ENCODE measurements at regions of chr6 and their contacts with region 1.

Region 1: GRCh38 chr6:37705239-37706051 is 7.8 kb upstream of the MDGA1 start:
- DNase-seq: peak; percentile 67 to 85
- H3K4me3 ChIP-seq: peak overlapping the region; percentile 6 to 64 (median 38)
- H3K27ac ChIP-seq: peak overlapping the region; percentile 63; the same call in 1 of the 2 replicates
- H3K4me1 ChIP-seq: peaks cover 3 to 10% (median 8%) of the 10 kb centered on the region in 4 experiments; a peak in 6 of 7 replicates
- H3K27me3 ChIP-seq: peaks cover 11 to 23% (median 20%) of the 10 kb centered on the region in 4 experiments
- CTCF ChIP-seq: peak in 2 of 3 experiments; percentile 55 to 65; a peak in 3 of 4 replicates
- EP300 ChIP-seq: no peak
- POLR2A ChIP-seq: peak in 1 of 2 experiments; percentile 54; a peak in 2 of 3 replicates
- RAD21 ChIP-seq: peak; percentile 51

Region 2: GRCh38 chr6:37648465-37649330 is 56.7 kb before region 1 on chr6:
- CTCF ChIA-PET with region 1: interaction called, 11 read pairs
- POLR2A ChIA-PET with region 1: no interaction called
- DNase-seq: peak; percentile 77 to 100
- H3K4me3 ChIP-seq: peak overlapping the region; percentile 9 to 54 (median 38)
- H3K27ac ChIP-seq: no peak overlapping the region
- H3K4me1 ChIP-seq: peaks cover 0 to 10% (median 6%) of the 10 kb centered on the region in 4 experiments; a peak in 4 of 7 replicates
- H3K27me3 ChIP-seq: peaks cover 3 to 27% (median 19%) of the 10 kb centered on the region in 4 experiments
- CTCF ChIP-seq: peak in 1 of 3 experiments; percentile 6; a peak in 1 of 4 replicates
- EP300 ChIP-seq: peak in 1 of 2 experiments; percentile 52; a peak in 1 of 3 replicates
- POLR2A ChIP-seq: 0 out of 3 replicates have a peak, but pooled peaks of 1 of the 2 experiments have one; percentile 30
- RAD21 ChIP-seq: no peak

Region 3: DNA sequence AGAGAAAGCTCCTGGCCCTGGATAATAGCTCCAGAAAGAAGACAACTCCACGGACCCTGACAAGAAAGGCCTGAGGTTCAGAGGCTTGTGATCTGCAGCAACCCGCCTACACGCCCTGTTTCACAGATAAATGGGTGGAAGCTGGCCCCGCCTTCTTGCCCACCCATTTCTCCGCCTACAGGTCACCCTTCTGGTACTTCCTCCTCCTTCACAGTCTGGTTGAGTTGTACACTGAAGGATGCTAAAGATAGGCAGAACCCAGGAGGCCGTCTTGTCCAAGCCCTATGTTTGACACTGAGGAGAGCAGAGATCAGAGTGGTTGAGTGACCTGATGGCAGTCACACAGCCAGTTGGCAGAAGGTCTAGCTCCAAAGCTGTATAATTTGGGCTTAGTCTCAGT is 26.4 kb after region 1 on chr6:
- CTCF ChIA-PET with region 1: interaction called, 38 read pairs
- POLR2A ChIA-PET with region 1: no interaction called
- DNase-seq: no peak
- H3K4me3 ChIP-seq: no peak overlapping the region
- H3K27ac ChIP-seq: no peak overlapping the region
- H3K4me1 ChIP-seq: no peaks in the 10 kb centered on the region; a peak in 1 of 7 replicates
- H3K27me3 ChIP-seq: no peaks in the 10 kb centered on the region; a peak in 2 of 7 replicates
- CTCF ChIP-seq: no peak
- EP300 ChIP-seq: no peak
- POLR2A ChIP-seq: no peak
- RAD21 ChIP-seq: no peak

Region 4: GRCh38 chr6:37741757-37742400 is 36.4 kb after region 1 on chr6:
- CTCF ChIA-PET with region 1: interaction called, 14 read pairs
- POLR2A ChIA-PET with region 1: no interaction called
- DNase-seq: peak in 1 of 2 experiments; percentile 69
- H3K4me3 ChIP-seq: no peak overlapping the region
- H3K27ac ChIP-seq: no peak overlapping the region
- H3K4me1 ChIP-seq: no peaks in the 10 kb centered on the region
- H3K27me3 ChIP-seq: peaks cover 0 to 23% (median 16%) of the 10 kb centered on the region in 4 experiments; a peak in 5 of 7 replicates
- CTCF ChIP-seq: peak; percentile 69 to 74 (median 72)
- EP300 ChIP-seq: no peak
- POLR2A ChIP-seq: no peak
- RAD21 ChIP-seq: peak; percentile 56 to 73

Region 5: GRCh38 chr6:37783856-37784584 is 78.6 kb after region 1 on chr6:
- CTCF ChIA-PET with region 1: interaction called, 10 read pairs
- POLR2A ChIA-PET with region 1: no interaction called
- DNase-seq: peak in 1 of 2 experiments; percentile 66
- H3K4me3 ChIP-seq: peak overlapping the region; percentile 44 to 73 (median 66)
- H3K27ac ChIP-seq: 0 out of 2 replicates have a peak overlapping the region, but pooled peaks have one; percentile 14
- H3K4me1 ChIP-seq: peaks cover 1 to 36% (median 20%) of the 10 kb centered on the region in 4 experiments
- H3K27me3 ChIP-seq: peaks cover 0 to 18% (median 14%) of the 10 kb centered on the region in 4 experiments; a peak in 6 of 7 replicates
- CTCF ChIP-seq: no peak
- EP300 ChIP-seq: no peak
- POLR2A ChIP-seq: peak in 1 of 2 experiments; percentile 52; a peak in 2 of 3 replicates
- RAD21 ChIP-seq: no peak

Region 6: GRCh38 chr6:37799263-37799644 is 93.8 kb after region 1 on chr6:
- CTCF ChIA-PET with region 1: no interaction called
- POLR2A ChIA-PET with region 1: no interaction called
- DNase-seq: no peak
- H3K4me3 ChIP-seq: no peak overlapping the region
- H3K27ac ChIP-seq: no peak overlapping the region
- H3K4me1 ChIP-seq: peaks cover 0 to 3% (median 0%) of the 10 kb centered on the region in 4 experiments; a peak in 1 of 7 replicates
- H3K27me3 ChIP-seq: peaks cover 0 to 2% (median 0%) of the 10 kb centered on the region in 4 experiments; a peak in 1 of 7 replicates
- CTCF ChIP-seq: no peak
- EP300 ChIP-seq: no peak
- POLR2A ChIP-seq: no peak
- RAD21 ChIP-seq: no peak

Region 7: GRCh38 chr6:37882724-37883413 is 177.4 kb after region 1 on chr6:
- CTCF ChIA-PET with region 1: no interaction called
- POLR2A ChIA-PET with region 1: no interaction called
- DNase-seq: no peak
- H3K4me3 ChIP-seq: no peak overlapping the region
- H3K27ac ChIP-seq: no peak overlapping the region
- H3K4me1 ChIP-seq: peaks cover 0 to 4% (median 3%) of the 10 kb centered on the region in 4 experiments; a peak in 3 of 7 replicates
- H3K27me3 ChIP-seq: no peaks in the 10 kb centered on the region
- CTCF ChIP-seq: no peak
- EP300 ChIP-seq: no peak
- POLR2A ChIP-seq: no peak
- RAD21 ChIP-seq: no peak